PC-3 (cell line): ENCODE measurements at regions of chr16 and their contacts with region 1.

Region 1: DNA sequence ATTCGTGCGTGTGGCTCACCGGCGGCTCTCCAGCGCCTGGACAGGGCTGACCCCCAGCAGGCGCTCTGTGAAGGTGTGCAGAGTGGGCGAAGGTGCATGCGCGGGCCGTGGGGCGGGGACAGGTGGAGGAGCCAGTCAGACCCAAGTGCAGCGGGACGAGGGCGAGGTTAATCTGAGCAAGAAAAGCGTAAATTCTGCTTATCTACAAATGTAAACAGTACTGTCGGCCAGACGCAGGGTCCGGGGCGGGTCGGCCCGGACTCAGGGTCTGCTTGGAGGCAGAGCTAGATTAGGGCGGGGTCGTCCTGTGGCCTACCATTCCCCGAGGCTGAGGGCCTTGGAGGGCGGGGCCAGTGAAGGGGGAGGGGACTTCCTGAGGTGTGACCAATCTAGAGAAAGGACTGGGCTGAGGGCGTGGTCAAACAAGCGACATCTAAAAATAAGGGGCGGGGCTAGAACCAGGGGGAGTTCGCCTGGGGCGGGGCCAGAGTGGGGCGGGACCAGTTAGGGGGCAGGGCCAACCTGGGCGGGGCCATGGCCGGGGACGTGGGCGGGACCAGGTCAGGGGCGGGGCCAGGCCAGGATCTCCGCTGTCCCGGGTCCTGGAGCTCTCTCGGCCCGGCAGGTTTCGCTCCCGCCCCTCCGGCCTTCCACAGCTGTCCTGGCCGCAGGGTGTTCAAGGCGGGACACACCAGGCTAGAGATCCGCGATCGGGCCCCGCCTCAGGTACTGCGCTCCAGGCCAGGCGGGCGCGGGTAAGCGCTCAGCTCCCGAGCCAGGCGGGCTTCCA is at the start of gene SEC14L5:
- DNase-seq: peak; percentile 95
- ATAC-seq: peak; percentile 79
- H3K4me3 ChIP-seq: peak within 1 kb of the TSS; percentile 68
- H3K27ac ChIP-seq: peak within 1 kb of the TSS; percentile 2; the same call in 1 of the 2 replicates
- H3K4me1 ChIP-seq: 0 out of 2 replicates have a peak, but pooled peaks cover 8% of the 10 kb centered on the region
- H3K27me3 ChIP-seq: no peaks in the 10 kb centered on the region
- CTCF ChIP-seq: no peak; the same call in 1 of the 2 replicates
- total RNA-seq, gene SEC14L5: not detected in 2 replicates

Region 2: DNA sequence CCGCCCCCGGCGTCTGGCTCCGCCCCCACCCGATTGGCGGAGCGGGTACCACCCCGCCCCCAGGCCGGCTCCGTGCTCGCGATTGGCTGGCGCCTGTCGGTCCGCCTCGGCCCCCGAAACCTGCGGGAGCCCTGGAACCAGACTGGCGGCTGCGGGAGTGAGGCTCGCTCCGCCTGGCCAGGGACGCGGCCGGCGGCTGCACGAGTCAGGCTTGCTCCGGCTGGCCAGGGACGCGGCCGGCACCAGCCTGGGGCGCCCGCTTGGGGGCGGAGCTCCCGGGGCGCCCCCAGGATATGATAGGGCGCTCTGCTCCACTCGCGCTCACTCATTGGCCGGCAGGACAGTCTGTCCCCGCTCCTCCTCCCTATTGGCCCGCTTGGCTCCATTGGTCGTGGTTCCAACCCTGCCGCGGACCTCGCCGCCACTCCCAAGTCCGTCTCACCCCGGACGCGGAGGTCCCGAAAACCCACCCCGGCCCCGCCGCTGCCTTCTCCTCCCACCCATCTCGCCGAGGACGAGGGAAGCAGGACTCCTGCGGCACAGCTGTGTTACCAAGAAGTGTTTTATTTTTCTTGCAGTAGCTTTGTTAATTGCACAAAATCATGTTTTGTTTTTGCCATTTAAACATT is 155.1 kb before region 1 on chr16:
- CTCF ChIA-PET with region 1: interaction called, 3 read pairs
- POLR2A ChIA-PET with region 1: no interaction called
- intact Hi-C with region 1: loop called (anchors 10 kb)
- DNase-seq: peak; percentile 82
- ATAC-seq: peak; percentile 91
- H3K4me3 ChIP-seq: peak overlapping the region; percentile 84
- H3K27ac ChIP-seq: no peak overlapping the region; the same call in 1 of the 2 replicates
- H3K4me1 ChIP-seq: peaks cover 14% of the 10 kb centered on the region
- H3K27me3 ChIP-seq: no peaks in the 10 kb centered on the region
- CTCF ChIP-seq: no peak